HepG2 (cell line): ENCODE measurements at regions of chr9 and their contacts with region 1.

Region 1: GRCh38 chr9:33737811-33738606 is 57.4 kb upstream of the PRSS3 start:
- DNase-seq: peak; percentile 56
- ATAC-seq: peak; percentile 95
- H3K4me3 ChIP-seq: no peak overlapping the region; a peak in 1 of 6 replicates
- H3K27ac ChIP-seq: no peak overlapping the region
- H3K4me1 ChIP-seq: peaks cover 13% of the 10 kb centered on the region; the same call in 1 of the 2 replicates
- H3K27me3 ChIP-seq: no peaks in the 10 kb centered on the region; a peak in 1 of 5 replicates
- CTCF ChIP-seq: peak; percentile 85
- EP300 ChIP-seq: no peak
- POLR2A ChIP-seq: no peak
- RAD21 ChIP-seq: peak; percentile 39; the same call in 1 of the 2 replicates

Region 2: DNA sequence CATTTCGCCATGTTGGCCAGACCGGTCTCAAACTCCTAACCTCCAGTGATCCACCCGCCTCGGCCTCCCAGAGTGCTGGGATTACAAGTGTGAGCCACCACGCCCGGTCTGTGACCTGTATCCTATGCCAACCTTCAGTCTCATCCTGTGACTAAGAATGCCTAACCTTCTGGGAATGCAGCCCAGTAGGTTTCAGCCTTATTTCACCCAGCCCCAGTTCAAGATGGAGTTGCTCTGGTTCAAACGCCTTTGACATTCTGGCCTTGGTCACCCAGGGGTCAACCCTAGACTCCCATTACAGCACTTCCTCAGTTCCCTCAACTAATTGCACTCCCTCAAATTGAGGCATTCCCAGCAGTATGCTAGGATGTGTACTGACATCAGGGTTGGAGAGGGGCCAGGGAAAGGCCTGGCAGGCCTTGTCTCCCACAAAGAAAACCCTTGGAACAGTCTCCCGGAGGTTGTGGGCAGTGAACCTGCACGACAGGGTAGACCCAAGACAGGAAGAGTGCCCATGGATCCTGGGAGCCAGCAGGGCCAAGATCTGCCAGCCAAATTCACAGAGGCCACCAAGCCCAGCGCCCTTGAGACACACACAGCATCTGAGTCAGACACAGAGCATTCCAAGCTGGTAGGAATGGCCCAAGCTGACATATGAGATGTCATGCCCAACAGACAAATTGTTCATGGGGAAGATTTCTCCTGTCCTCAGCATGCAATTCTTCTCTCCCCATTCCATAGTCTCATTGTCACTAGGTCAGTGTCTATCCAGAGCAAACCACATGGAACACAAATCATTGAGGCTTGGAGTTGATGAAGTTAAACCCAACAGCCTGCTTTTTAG is 636.7 kb before region 1 on chr9:
- CTCF ChIA-PET with region 1: no interaction called
- POLR2A ChIA-PET with region 1: no interaction called
- in situ Hi-C with region 1: no loop called
- intact Hi-C with region 1: no loop called
- DNase-seq: no peak
- ATAC-seq: peak; percentile 30; the same call in 2 of the 3 replicates
- H3K4me3 ChIP-seq: no peak overlapping the region
- H3K27ac ChIP-seq: no peak overlapping the region
- H3K4me1 ChIP-seq: peaks cover 15% of the 10 kb centered on the region; the same call in 1 of the 2 replicates
- H3K27me3 ChIP-seq: peaks cover 0 to 2% of the 10 kb centered on the region in 2 experiments; a peak in 2 of 5 replicates
- CTCF ChIP-seq: no peak
- EP300 ChIP-seq: no peak
- POLR2A ChIP-seq: no peak
- RAD21 ChIP-seq: no peak

Region 3: DNA sequence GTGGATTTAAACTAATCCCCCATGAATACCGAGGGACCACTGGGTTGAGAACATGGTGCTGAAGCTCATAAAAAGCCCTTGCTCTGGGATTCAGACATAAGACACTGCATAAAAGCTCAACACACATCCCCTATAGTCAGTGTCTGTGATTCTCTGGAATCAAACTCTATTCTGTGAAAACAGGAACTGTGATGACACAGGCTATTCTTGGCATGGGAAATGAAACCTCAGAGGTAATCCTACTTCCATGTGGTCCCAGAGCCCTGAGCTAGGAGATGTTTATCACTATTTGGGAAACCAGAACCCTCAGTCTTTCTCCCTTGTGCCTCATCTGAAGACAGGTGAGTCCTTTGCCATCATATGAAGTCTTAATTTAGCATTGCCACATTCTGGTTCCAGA is 78.1 kb before region 1 on chr9:
- CTCF ChIA-PET with region 1: no interaction called
- POLR2A ChIA-PET with region 1: no interaction called
- in situ Hi-C with region 1: no loop called
- intact Hi-C with region 1: no loop called
- DNase-seq: no peak
- ATAC-seq: no peak
- H3K4me3 ChIP-seq: no peak overlapping the region
- H3K27ac ChIP-seq: no peak overlapping the region
- H3K4me1 ChIP-seq: no peaks in the 10 kb centered on the region
- H3K27me3 ChIP-seq: 0 out of 5 replicates have a peak, but pooled peaks cover 0 to 2% of the 10 kb centered on the region in 2 experiments
- CTCF ChIP-seq: no peak
- EP300 ChIP-seq: no peak
- POLR2A ChIP-seq: no peak
- RAD21 ChIP-seq: no peak

Region 4: GRCh38 chr9:33778700-33779351 is 40.8 kb after region 1 on chr9:
- CTCF ChIA-PET with region 1: interaction called, 22 read pairs
- POLR2A ChIA-PET with region 1: no interaction called
- in situ Hi-C with region 1: no loop called
- intact Hi-C with region 1: loop called (anchors 1 kb)
- DNase-seq: peak; percentile 54
- ATAC-seq: peak; percentile 86
- H3K4me3 ChIP-seq: no peak overlapping the region
- H3K27ac ChIP-seq: no peak overlapping the region
- H3K4me1 ChIP-seq: no peaks in the 10 kb centered on the region
- H3K27me3 ChIP-seq: no peaks in the 10 kb centered on the region
- CTCF ChIP-seq: peak; percentile 85
- EP300 ChIP-seq: no peak
- POLR2A ChIP-seq: no peak
- RAD21 ChIP-seq: no peak